ENCODE measurements at regions of chr21 and their contacts with region 1.

Region 1: GRCh38 chr21:31457675-31458074 is 113.6 kb upstream of the TIAM1 start:
- DNase-seq: peak; percentile 25
- H3K4me3 Mint-ChIP-seq: no peak overlapping the region
- H3K27ac Mint-ChIP-seq: no peak overlapping the region
- H3K4me1 Mint-ChIP-seq: no peaks in the 10 kb centered on the region
- H3K27me3 Mint-ChIP-seq: no peaks in the 10 kb centered on the region
- CTCF ChIP-seq: peak; percentile 15

Region 2: DNA sequence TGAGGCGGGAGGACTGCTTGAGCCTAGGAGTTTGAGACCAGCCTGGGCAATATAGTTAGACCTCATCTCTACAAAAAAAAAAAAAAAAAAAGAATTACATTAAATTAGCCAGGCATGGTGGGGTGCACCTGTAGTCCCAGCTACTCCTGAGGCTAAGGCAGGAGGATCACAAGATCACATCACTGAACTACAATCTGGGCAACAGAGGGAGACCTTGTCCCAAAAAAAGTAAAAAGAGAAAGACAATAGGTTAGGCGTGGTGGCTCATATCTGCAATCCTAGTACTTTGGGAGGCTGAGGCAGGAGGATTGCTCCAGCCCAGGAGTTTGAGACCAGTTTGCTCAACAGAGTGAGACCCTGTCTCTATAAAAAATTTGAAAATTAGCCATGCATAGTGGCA is 243.9 kb before region 1 on chr21:
- CTCF ChIA-PET with region 1: no interaction called
- POLR2A ChIA-PET with region 1: no interaction called
- intact Hi-C with region 1: loop called (anchors 5 kb)
- DNase-seq: peak; percentile 39
- H3K4me3 Mint-ChIP-seq: no peak overlapping the region
- H3K27ac Mint-ChIP-seq: no peak overlapping the region
- H3K4me1 Mint-ChIP-seq: peaks cover 4% of the 10 kb centered on the region
- H3K27me3 Mint-ChIP-seq: no peaks in the 10 kb centered on the region
- CTCF ChIP-seq: no peak

Region 3: DNA sequence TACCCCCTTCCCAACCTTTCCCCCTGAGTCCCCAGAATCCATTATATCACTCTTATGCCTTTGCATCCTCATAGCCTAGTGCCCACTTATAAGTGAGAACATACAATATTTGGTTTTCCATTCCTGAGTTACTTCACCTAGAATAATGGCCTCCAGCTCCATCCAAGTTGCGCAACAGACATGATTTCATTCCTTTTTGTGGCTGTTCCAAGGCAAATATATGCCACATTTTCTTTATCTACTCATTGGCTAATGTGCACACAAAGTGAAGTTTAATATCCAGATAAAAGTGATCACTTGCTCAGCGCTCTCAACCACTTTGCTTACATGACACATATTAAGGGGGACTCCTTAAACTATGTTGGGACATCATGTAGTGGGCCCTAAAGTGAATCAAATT is 41.2 kb before region 1 on chr21:
- CTCF ChIA-PET with region 1: no interaction called
- POLR2A ChIA-PET with region 1: no interaction called
- intact Hi-C with region 1: no loop called
- DNase-seq: peak; percentile 76
- H3K4me3 Mint-ChIP-seq: no peak overlapping the region
- H3K27ac Mint-ChIP-seq: peak overlapping the region; percentile 9
- H3K4me1 Mint-ChIP-seq: peaks cover 7% of the 10 kb centered on the region
- H3K27me3 Mint-ChIP-seq: no peaks in the 10 kb centered on the region
- CTCF ChIP-seq: no peak